Thyroid gland (tissue), 4 donors: ENCODE measurements at regions of chr20 and their contacts with region 1.

Region 1: GRCh38 chr20:63381807-63382322 is 20.7 kb upstream of the CHRNA4 start:
- DNase-seq: no peak
- H3K4me3 ChIP-seq: no peak overlapping the region
- H3K27ac ChIP-seq: no peak overlapping the region
- H3K4me1 ChIP-seq: no peaks in the 10 kb centered on the region
- H3K27me3 ChIP-seq: no peaks in the 10 kb centered on the region
- CTCF ChIP-seq: peak; percentile 86 to 98 (median 96)
- POLR2A ChIP-seq: no peak

Region 2: GRCh38 chr20:62734881-62735821 is 646.7 kb before region 1 on chr20:
- intact Hi-C with region 1: no loop called
- DNase-seq: peak in 1 of 2 donors; percentile 0
- H3K4me3 ChIP-seq: no peak overlapping the region
- H3K27ac ChIP-seq: no peak overlapping the region
- H3K4me1 ChIP-seq: no peaks in the 10 kb centered on the region
- H3K27me3 ChIP-seq: no peaks in the 10 kb centered on the region
- CTCF ChIP-seq: no peak
- POLR2A ChIP-seq: no peak

Region 3: GRCh38 chr20:63178889-63179686 is 202.8 kb before region 1 on chr20:
- intact Hi-C with region 1: loop called (anchors 10 kb)
- DNase-seq: peak in 1 of 2 donors; percentile 18
- H3K4me3 ChIP-seq: no peak overlapping the region
- H3K27ac ChIP-seq: no peak overlapping the region
- H3K4me1 ChIP-seq: peaks cover 5 to 31% of the 10 kb centered on the region in 2 donors
- H3K27me3 ChIP-seq: peaks cover 52% of the 10 kb centered on the region
- CTCF ChIP-seq: peak in 2 of 6 experiments; percentile 31 to 39
- POLR2A ChIP-seq: no peak

Region 4: GRCh38 chr20:63280929-63281545 is 100.8 kb before region 1 on chr20:
- intact Hi-C with region 1: no loop called
- DNase-seq: no peak
- H3K4me3 ChIP-seq: no peak overlapping the region
- H3K27ac ChIP-seq: no peak overlapping the region
- H3K4me1 ChIP-seq: no peaks in the 10 kb centered on the region
- H3K27me3 ChIP-seq: no peaks in the 10 kb centered on the region
- CTCF ChIP-seq: no peak
- POLR2A ChIP-seq: no peak

Region 5: GRCh38 chr20:63309261-63310071 is 72.4 kb before region 1 on chr20:
- intact Hi-C with region 1: loop called (anchors 2 kb)
- DNase-seq: peak; percentile 50 to 52
- H3K4me3 ChIP-seq: no peak overlapping the region
- H3K27ac ChIP-seq: no peak overlapping the region
- H3K4me1 ChIP-seq: no peaks in the 10 kb centered on the region
- H3K27me3 ChIP-seq: peaks cover 6% of the 10 kb centered on the region
- CTCF ChIP-seq: peak; percentile 72 to 91 (median 85)
- POLR2A ChIP-seq: no peak

Region 6: GRCh38 chr20:64035066-64035932 is 653.4 kb after region 1 on chr20:
- intact Hi-C with region 1: no loop called
- DNase-seq: no peak
- H3K4me3 ChIP-seq: no peak overlapping the region
- H3K27ac ChIP-seq: no peak overlapping the region
- H3K4me1 ChIP-seq: peaks cover 7 to 29% of the 10 kb centered on the region in 2 donors
- H3K27me3 ChIP-seq: no peaks in the 10 kb centered on the region
- CTCF ChIP-seq: no peak
- POLR2A ChIP-seq: no peak